ENCODE measurements at regions of chr1 and their contacts with region 1.

Region 1: GRCh38 chr1:8554956-8555534 is 237.1 kb downstream of the SLC45A1 start:
- DNase-seq: no peak
- H3K4me3 ChIP-seq: no peak overlapping the region
- H3K27me3 ChIP-seq: no peaks in the 10 kb centered on the region
- CTCF ChIP-seq: no peak

Region 2: GRCh38 chr1:8516793-8517556 is 38.1 kb before region 1 on chr1:
- CTCF ChIA-PET with region 1: interaction called, 3 read pairs
- POLR2A ChIA-PET with region 1: interaction called, 12 read pairs
- DNase-seq: peak; percentile 62
- H3K4me3 ChIP-seq: no peak overlapping the region
- H3K27me3 ChIP-seq: no peaks in the 10 kb centered on the region
- CTCF ChIP-seq: no peak

Measured in BJ (cell line).